K562 (cell line): ENCODE measurements at regions of chr11 and their contacts with region 1.

Region 1: GRCh38 chr11:5489576-5490357 is 1.3 kb downstream of the OR52D1 start:
- DNase-seq: no peak
- ATAC-seq: no peak
- H3K4me3 ChIP-seq: no peak overlapping the region
- H3K27ac ChIP-seq: no peak overlapping the region
- H3K4me1 ChIP-seq: peaks cover 4 to 5% of the 10 kb centered on the region in 2 experiments; a peak in 1 of 5 replicates
- H3K27me3 ChIP-seq: no peaks in the 10 kb centered on the region
- CTCF ChIP-seq: no peak
- EP300 ChIP-seq: no peak
- POLR2A ChIP-seq: no peak
- RAD21 ChIP-seq: no peak

Region 2: DNA sequence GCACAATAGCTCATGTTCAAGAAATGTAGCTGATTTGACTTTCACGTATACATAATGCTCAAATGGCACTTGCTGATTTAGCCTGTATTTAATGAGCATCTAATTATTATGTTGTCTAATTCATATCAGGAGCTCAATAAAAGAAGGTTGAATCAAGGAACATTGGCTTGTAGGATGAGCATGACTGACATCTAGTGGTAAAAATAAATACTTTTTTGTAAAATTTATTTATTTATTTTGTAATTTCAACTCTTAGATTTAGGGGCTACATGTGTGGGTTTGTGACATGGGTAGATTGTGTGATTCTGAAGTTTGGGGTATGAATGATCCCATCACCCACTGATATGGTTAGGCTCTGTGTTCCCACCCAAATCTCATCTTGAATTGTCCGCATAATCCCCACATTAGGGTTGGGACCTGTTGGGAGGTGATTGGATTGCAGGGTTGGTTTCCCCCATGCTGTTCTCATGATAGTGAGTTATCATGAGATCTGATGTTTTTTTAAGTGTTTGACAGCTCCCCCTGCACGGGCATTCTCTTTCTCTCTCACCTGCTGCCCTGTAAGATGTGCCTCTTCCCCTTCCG is 401.5 kb after region 1 on chr11:
- CTCF ChIA-PET with region 1: no interaction called
- POLR2A ChIA-PET with region 1: no interaction called
- in situ Hi-C with region 1: no loop called
- intact Hi-C with region 1: loop called (anchors 10 kb)
- DNase-seq: peak; percentile 11 to 20 (median 11)
- ATAC-seq: no peak
- H3K4me3 ChIP-seq: no peak overlapping the region
- H3K27ac ChIP-seq: no peak overlapping the region
- H3K4me1 ChIP-seq: no peaks in the 10 kb centered on the region
- H3K27me3 ChIP-seq: peaks cover 0 to 2% of the 10 kb centered on the region in 2 experiments; a peak in 1 of 5 replicates
- CTCF ChIP-seq: peak in 2 of 3 experiments; percentile 43 to 66; a peak in 4 of 6 replicates
- EP300 ChIP-seq: no peak
- POLR2A ChIP-seq: no peak
- RAD21 ChIP-seq: peak; percentile 84 to 85